HepG2 (cell line): ENCODE measurements at regions of chr1 and their contacts with region 1.

Region 1: GRCh38 chr1:87495870-87496269 is 167.2 kb downstream of the LMO4 start:
- DNase-seq: no peak
- ATAC-seq: no peak
- H3K4me3 ChIP-seq: no peak overlapping the region
- H3K27ac ChIP-seq: no peak overlapping the region
- H3K4me1 ChIP-seq: no peaks in the 10 kb centered on the region
- H3K27me3 ChIP-seq: no peaks in the 10 kb centered on the region
- CTCF ChIP-seq: no peak
- EP300 ChIP-seq: no peak
- POLR2A ChIP-seq: no peak
- RAD21 ChIP-seq: no peak

Region 2: DNA sequence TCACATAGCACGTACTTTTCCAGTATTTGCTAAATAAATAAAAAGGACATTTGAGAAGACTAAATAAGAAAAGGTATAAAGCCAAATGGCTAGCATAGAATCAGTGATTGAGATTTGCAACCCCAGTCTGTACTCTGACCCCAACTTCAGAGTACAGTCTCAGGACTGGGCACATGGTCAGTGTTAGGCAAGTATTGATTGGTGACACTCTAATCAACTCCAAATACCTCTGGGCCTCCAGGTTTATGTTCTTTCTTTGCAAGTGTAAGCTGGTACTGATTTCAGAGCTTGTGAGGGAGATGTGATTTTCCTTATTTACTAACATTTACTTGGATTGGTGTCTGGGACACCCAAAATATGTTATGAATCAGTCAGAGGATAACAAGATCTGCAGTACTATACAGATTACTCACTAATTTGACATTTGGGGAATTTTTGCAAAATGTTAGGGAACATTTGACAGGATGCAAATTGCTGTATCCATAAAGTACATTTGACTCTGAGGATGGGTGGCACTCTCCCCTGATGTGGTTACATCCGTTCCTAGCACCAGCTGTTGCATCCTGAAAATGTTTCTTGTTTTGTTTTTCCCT is 132.9 kb before region 1 on chr1:
- CTCF ChIA-PET with region 1: no interaction called
- POLR2A ChIA-PET with region 1: no interaction called
- in situ Hi-C with region 1: no loop called
- intact Hi-C with region 1: no loop called
- DNase-seq: no peak
- ATAC-seq: no peak
- H3K4me3 ChIP-seq: no peak overlapping the region
- H3K27ac ChIP-seq: no peak overlapping the region
- H3K4me1 ChIP-seq: 0 out of 2 replicates have a peak, but pooled peaks cover 7% of the 10 kb centered on the region
- H3K27me3 ChIP-seq: no peaks in the 10 kb centered on the region
- CTCF ChIP-seq: no peak
- EP300 ChIP-seq: no peak
- POLR2A ChIP-seq: no peak
- RAD21 ChIP-seq: no peak

Region 3: GRCh38 chr1:87464022-87464490 is 31.8 kb before region 1 on chr1:
- CTCF ChIA-PET with region 1: no interaction called
- POLR2A ChIA-PET with region 1: no interaction called
- in situ Hi-C with region 1: no loop called
- intact Hi-C with region 1: loop called (anchors 1 kb)
- DNase-seq: no peak
- ATAC-seq: no peak
- H3K4me3 ChIP-seq: no peak overlapping the region
- H3K27ac ChIP-seq: no peak overlapping the region
- H3K4me1 ChIP-seq: no peaks in the 10 kb centered on the region
- H3K27me3 ChIP-seq: no peaks in the 10 kb centered on the region; a peak in 1 of 5 replicates
- CTCF ChIP-seq: no peak
- EP300 ChIP-seq: no peak
- POLR2A ChIP-seq: no peak
- RAD21 ChIP-seq: no peak

Region 4: GRCh38 chr1:87733386-87733785 is 237.5 kb after region 1 on chr1:
- CTCF ChIA-PET with region 1: no interaction called
- POLR2A ChIA-PET with region 1: no interaction called
- in situ Hi-C with region 1: no loop called
- intact Hi-C with region 1: no loop called
- DNase-seq: no peak
- ATAC-seq: no peak
- H3K4me3 ChIP-seq: no peak overlapping the region
- H3K27ac ChIP-seq: no peak overlapping the region
- H3K4me1 ChIP-seq: no peaks in the 10 kb centered on the region
- H3K27me3 ChIP-seq: no peaks in the 10 kb centered on the region; a peak in 1 of 5 replicates
- CTCF ChIP-seq: no peak
- EP300 ChIP-seq: no peak
- POLR2A ChIP-seq: no peak
- RAD21 ChIP-seq: no peak